ENCODE measurements at regions of chr14 and their contacts with region 1.

Region 1: DNA sequence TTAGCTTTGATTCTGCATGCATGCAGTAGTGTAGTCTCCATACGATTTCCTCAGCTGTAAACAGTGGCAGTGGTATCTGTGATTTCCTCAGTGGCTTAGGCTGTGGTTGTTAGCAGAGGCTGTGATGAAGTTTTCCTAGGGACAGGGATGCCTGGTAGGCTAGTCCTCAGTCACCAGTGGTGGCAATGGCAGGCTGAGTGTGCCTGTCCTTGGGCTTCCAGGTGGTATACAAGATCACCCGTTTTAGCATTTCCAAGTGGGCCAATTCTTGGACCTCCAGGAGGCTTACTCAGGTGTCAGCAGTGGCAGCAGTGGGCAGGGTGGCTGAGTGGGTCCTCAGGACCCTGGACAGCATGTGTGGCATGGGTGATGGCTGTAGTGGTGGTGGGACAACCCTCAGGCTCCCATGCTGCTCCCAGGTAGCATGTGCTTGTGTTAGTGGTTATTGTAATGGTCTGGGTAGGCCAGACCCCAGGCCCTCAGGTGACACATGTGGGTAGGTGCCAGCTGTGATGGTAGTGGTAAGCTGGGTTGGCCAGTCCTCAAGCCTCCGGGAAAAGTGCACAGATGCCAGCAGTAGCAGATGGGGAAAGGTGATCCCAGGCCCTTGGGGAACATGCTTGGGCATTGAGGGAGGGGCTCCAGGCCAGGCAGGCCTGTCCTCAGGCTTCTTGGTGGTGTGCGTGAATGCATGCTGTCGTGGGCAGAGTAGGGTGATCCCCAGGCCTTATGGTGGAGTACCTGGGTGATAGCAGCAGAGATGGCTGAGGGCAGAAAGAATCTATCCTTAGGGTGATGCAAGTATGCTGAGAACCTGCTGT is 146.5 kb downstream of the PAPOLA start:
- DNase-seq: no peak
- H3K4me3 ChIP-seq: no peak overlapping the region
- H3K27ac ChIP-seq: no peak overlapping the region
- H3K4me1 ChIP-seq: no peaks in the 10 kb centered on the region
- H3K27me3 ChIP-seq: no peaks in the 10 kb centered on the region
- CTCF ChIP-seq: no peak

Region 2: GRCh38 chr14:96231526-96232130 is 417.1 kb before region 1 on chr14:
- intact Hi-C with region 1: loop called (anchors 5 kb)
- DNase-seq: no peak
- H3K4me3 ChIP-seq: no peak overlapping the region
- H3K27ac ChIP-seq: no peak overlapping the region
- H3K4me1 ChIP-seq: no peaks in the 10 kb centered on the region
- H3K27me3 ChIP-seq: no peaks in the 10 kb centered on the region
- CTCF ChIP-seq: no peak

Measured in tibial artery (tissue), 4 donors.